K562 (cell line): ENCODE measurements at regions of chr18 and their contacts with region 1.

Region 1: GRCh38 chr18:7221424-7222155 is 9.3 kb upstream of the LRRC30 start:
- DNase-seq: peak; percentile 39 to 66 (median 46)
- ATAC-seq: peak; percentile 97
- H3K4me3 ChIP-seq: no peak overlapping the region
- H3K27ac ChIP-seq: no peak overlapping the region
- H3K4me1 ChIP-seq: no peaks in the 10 kb centered on the region
- H3K27me3 ChIP-seq: no peaks in the 10 kb centered on the region
- CTCF ChIP-seq: peak; percentile 72 to 77 (median 77)
- EP300 ChIP-seq: no peak
- POLR2A ChIP-seq: no peak
- RAD21 ChIP-seq: peak; percentile 65 to 79

Region 2: DNA sequence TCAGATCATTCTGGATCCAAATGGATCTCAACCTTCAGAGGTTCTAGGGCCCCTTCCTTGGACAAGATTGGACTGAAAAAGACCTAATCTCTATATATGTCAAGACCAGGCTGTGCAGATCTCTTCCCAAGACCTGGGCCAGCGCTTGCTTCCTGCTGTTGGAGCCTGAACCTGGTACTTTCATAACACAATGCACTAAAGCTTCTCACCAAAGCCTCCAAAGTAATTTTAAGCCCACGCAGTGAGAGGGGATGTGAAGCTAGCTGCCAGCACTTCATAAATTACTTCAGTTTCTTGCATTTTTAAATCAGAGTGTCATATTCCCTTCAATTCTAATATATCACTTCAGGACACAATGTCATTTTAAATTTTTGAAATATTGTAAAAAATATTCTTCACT is 60.0 kb after region 1 on chr18:
- CTCF ChIA-PET with region 1: no interaction called
- POLR2A ChIA-PET with region 1: no interaction called
- in situ Hi-C with region 1: no loop called
- intact Hi-C with region 1: loop called (anchors 10 kb)
- DNase-seq: no peak
- ATAC-seq: no peak
- H3K4me3 ChIP-seq: no peak overlapping the region
- H3K27ac ChIP-seq: no peak overlapping the region
- H3K4me1 ChIP-seq: no peaks in the 10 kb centered on the region
- H3K27me3 ChIP-seq: no peaks in the 10 kb centered on the region
- CTCF ChIP-seq: no peak
- EP300 ChIP-seq: no peak
- POLR2A ChIP-seq: no peak
- RAD21 ChIP-seq: no peak

Region 3: GRCh38 chr18:8389391-8390340 is 1168.1 kb after region 1 on chr18:
- CTCF ChIA-PET with region 1: no interaction called
- POLR2A ChIA-PET with region 1: no interaction called
- in situ Hi-C with region 1: no loop called
- intact Hi-C with region 1: loop called (anchors 1 kb)
- DNase-seq: peak; percentile 69 to 75 (median 72)
- ATAC-seq: peak; percentile 97
- H3K4me3 ChIP-seq: no peak overlapping the region
- H3K27ac ChIP-seq: no peak overlapping the region
- H3K4me1 ChIP-seq: no peaks in the 10 kb centered on the region
- H3K27me3 ChIP-seq: peaks cover 10 to 11% of the 10 kb centered on the region in 2 experiments; a peak in 3 of 5 replicates
- CTCF ChIP-seq: peak; percentile 77 to 94 (median 87)
- EP300 ChIP-seq: no peak
- POLR2A ChIP-seq: no peak
- RAD21 ChIP-seq: peak; percentile 53 to 77